ENCODE measurements at regions of chr6 and their contacts with region 1.

Region 1: GRCh38 chr6:81849248-81849647 is 96.8 kb upstream of the TENT5A start:
- DNase-seq: no peak
- H3K4me3 ChIP-seq: no peak overlapping the region
- H3K27ac ChIP-seq: no peak overlapping the region
- H3K4me1 ChIP-seq: no peaks in the 10 kb centered on the region
- H3K27me3 ChIP-seq: no peaks in the 10 kb centered on the region
- CTCF ChIP-seq: no peak

Region 2: DNA sequence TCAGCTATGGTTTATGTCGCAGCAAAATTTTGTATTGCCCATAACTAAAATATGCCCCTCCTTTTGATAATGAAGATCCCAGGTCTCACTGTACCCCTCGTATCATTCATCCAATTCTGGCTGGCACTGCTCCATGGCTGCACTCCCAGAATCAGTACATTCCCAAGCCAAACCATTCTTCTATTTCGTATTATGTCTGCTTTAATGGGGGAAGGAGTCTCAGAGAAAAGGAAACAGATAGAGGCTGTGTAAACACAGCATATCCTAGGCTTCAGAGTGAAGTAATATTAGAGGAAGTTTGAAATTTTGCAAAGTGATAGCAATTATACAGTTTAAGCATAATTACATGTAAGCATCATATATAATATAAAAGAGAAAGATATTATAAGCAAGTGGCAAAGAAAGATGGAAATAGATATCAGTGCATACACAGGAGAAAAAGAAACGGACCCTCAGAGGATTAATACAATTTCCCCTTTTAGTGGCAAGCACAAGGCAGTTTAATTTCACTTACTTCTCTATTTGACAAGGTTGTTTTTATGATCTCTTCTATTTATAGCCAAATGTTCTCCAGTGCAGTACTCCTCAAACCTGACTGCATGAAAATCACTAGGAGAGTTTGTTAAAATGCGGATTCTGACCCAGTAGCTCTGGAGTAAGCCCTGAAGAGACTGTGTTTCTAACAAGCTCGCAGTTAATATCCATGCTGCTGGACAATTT is 40.2 kb before region 1 on chr6:
- CTCF ChIA-PET with region 1: no interaction called
- POLR2A ChIA-PET with region 1: no interaction called
- intact Hi-C with region 1: no loop called
- DNase-seq: no peak
- H3K4me3 ChIP-seq: no peak overlapping the region
- H3K27ac ChIP-seq: no peak overlapping the region
- H3K4me1 ChIP-seq: no peaks in the 10 kb centered on the region
- H3K27me3 ChIP-seq: no peaks in the 10 kb centered on the region
- CTCF ChIP-seq: no peak

Region 3: DNA sequence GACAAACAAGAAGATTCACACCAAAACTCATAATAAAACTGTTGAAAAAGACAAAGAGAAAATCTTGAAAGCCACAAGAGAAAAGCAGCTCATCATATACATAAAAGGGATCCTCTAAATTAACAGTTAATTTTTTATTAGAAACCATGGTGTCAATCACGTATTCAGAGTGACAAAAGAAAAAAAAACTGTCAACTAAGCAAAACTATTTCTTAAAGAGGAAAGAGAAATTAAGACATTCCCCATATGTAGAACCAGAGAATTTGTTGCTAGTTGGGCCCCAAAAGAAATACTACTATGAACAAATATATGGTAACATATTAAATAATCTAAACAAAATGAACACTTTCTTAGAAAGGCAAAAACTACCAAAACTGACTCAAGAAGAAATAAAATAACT is 22.5 kb before region 1 on chr6:
- CTCF ChIA-PET with region 1: no interaction called
- POLR2A ChIA-PET with region 1: no interaction called
- intact Hi-C with region 1: loop called (anchors 1 kb)
- DNase-seq: no peak
- H3K4me3 ChIP-seq: no peak overlapping the region
- H3K27ac ChIP-seq: no peak overlapping the region
- H3K4me1 ChIP-seq: no peaks in the 10 kb centered on the region
- H3K27me3 ChIP-seq: no peaks in the 10 kb centered on the region
- CTCF ChIP-seq: no peak

Region 4: GRCh38 chr6:82095091-82095490 is 245.8 kb after region 1 on chr6:
- CTCF ChIA-PET with region 1: no interaction called
- POLR2A ChIA-PET with region 1: no interaction called
- intact Hi-C with region 1: no loop called
- DNase-seq: no peak
- H3K4me3 ChIP-seq: no peak overlapping the region
- H3K27ac ChIP-seq: no peak overlapping the region
- H3K4me1 ChIP-seq: no peaks in the 10 kb centered on the region
- H3K27me3 ChIP-seq: no peaks in the 10 kb centered on the region
- CTCF ChIP-seq: 0 out of 2 replicates have a peak, but pooled peaks have one; percentile 11